ENCODE measurements at regions of chr11 and their contacts with region 1.

Region 1: DNA sequence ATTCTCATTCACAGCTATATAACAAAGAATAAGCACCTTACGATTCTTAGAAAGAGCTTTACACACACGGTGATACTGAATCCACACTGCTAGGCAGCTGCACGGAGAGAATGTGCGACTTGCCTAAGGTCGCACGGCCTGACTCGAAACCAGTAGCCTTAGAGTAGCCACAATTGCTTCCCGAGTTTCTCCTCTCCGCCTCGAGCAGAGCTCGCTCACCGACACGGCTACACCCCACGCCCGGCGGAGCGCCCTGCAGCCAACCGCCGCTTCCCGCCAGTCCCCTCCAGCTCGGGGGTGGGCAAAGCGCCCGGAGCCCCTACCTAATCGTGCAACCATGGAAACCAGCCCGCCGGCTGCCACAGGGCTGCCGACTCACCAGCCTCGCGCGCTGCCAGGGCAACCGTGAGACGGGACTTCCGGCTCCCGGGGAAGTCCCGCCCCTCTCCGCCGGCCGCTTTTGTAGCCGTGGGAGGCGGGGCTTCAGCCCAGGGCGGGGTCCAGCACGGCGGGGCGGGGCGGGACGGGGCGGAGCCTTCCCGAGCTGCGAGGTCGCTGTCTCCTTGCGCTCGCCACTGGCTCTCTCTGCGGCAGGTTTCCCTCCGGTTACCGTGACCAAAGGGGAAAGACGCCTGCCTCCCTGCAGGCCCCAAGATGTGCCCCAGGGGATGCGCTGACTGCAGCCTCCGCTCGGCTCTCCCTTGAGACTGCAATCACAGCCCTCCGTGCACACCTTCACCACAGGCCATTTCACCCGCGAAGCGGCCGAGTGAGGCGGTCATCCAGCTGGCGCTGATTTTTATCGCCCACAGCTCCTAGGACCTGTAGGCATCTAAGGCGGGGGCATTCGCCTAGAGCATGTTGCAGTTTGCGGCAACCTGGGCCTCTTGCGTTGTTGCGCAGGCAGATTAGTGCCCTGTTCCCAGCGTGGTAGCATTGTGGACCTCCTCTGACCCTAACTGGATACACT is 1.1 kb downstream of the BSCL2 start:
- DNase-seq: peak; percentile 96
- ATAC-seq: peak; percentile 76
- H3K4me3 Mint-ChIP-seq: peak overlapping the region; percentile 88
- H3K27ac Mint-ChIP-seq: peak overlapping the region; percentile 74
- H3K4me1 Mint-ChIP-seq: peaks cover 51% of the 10 kb centered on the region
- H3K27me3 Mint-ChIP-seq: no peaks in the 10 kb centered on the region

Region 2: GRCh38 chr11:62536301-62536957 is 169.7 kb before region 1 on chr11:
- CTCF ChIA-PET with region 1: no interaction called
- DNase-seq: no peak
- ATAC-seq: no peak
- H3K4me3 Mint-ChIP-seq: no peak overlapping the region
- H3K27ac Mint-ChIP-seq: no peak overlapping the region
- H3K4me1 Mint-ChIP-seq: peaks cover 46% of the 10 kb centered on the region
- H3K27me3 Mint-ChIP-seq: no peaks in the 10 kb centered on the region

Region 3: GRCh38 chr11:62573592-62574362 is 132.4 kb before region 1 on chr11 and contains the start of gene EEF1G:
- CTCF ChIA-PET with region 1: no interaction called
- DNase-seq: peak; percentile 100
- ATAC-seq: peak; percentile 94
- H3K4me3 Mint-ChIP-seq: peak within 1 kb of the TSS; percentile 94
- H3K27ac Mint-ChIP-seq: peak within 1 kb of the TSS; percentile 89
- H3K4me1 Mint-ChIP-seq: peaks cover 51% of the 10 kb centered on the region
- H3K27me3 Mint-ChIP-seq: no peaks in the 10 kb centered on the region
- total RNA-seq, gene EEF1G: 878 to 1,201 TPM

Region 4: GRCh38 chr11:62678770-62679696 is 27.1 kb before region 1 on chr11 and contains the start of gene UBXN1:
- CTCF ChIA-PET with region 1: interaction called, 14 read pairs
- DNase-seq: peak; percentile 89
- ATAC-seq: peak; percentile 90
- H3K4me3 Mint-ChIP-seq: peak within 1 kb of the TSS; percentile 84
- H3K27ac Mint-ChIP-seq: peak within 1 kb of the TSS; percentile 90
- H3K4me1 Mint-ChIP-seq: peaks cover 34% of the 10 kb centered on the region
- H3K27me3 Mint-ChIP-seq: no peaks in the 10 kb centered on the region
- total RNA-seq, gene UBXN1: 115 to 152 TPM

Region 5: DNA sequence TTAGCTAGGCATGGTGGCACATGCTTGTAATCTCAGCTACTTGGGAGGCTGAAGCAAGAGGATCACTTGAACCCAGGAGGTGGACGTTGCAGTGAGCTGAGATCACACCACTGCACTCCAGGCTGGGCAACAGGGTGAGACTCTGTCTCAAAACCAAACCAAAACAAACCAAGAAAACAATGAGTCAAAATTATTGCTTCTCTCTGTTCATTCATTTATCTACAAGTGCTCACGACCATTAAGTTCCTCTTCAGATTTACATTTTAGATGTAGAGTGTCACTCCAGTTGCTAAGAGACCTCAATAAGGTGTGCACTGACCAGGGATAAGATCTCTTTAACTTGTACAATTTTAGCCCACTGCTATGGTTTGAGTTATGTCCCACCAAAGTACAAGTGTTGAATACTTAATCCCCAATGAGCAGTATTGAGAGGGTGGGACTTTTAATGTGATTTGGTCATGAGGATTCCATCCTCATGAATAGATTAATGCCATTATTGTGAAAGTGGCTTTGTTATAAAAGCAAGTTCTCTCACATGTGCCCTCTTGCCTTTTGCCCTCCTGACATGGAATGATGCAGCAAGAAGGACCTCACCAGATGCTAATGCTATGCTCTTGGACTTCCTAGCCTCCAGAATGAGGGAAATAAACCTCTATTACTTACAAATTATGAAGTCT is 13.3 kb after region 1 on chr11:
- CTCF ChIA-PET with region 1: interaction called, 10 read pairs
- DNase-seq: no peak
- ATAC-seq: peak; percentile 58
- H3K4me3 Mint-ChIP-seq: no peak overlapping the region
- H3K27ac Mint-ChIP-seq: peak overlapping the region; percentile 42
- H3K4me1 Mint-ChIP-seq: peaks cover 79% of the 10 kb centered on the region
- H3K27me3 Mint-ChIP-seq: no peaks in the 10 kb centered on the region

Measured in activated CD8-positive, alpha-beta memory T cell treated with anti-CD3 and anti-CD28 coated beads, Interleukin-2, amount 10 ng/mL, durations not matched to agents 7 days and 5 days (primary cell).